ENCODE measurements at regions of chr3 and their contacts with region 1.

Region 1: GRCh38 chr3:152331018-152331541 is 62.4 kb downstream of the MBNL1 start:
- DNase-seq: no peak
- ATAC-seq: no peak
- H3K4me3 ChIP-seq: no peak overlapping the region
- H3K4me3 Mint-ChIP-seq: peak overlapping the region; percentile 6
- H3K27ac ChIP-seq: no peak overlapping the region
- H3K27ac Mint-ChIP-seq: peak overlapping the region; percentile 77
- H3K4me1 ChIP-seq: peaks cover 74% of the 10 kb centered on the region
- H3K4me1 Mint-ChIP-seq: peaks cover 88% of the 10 kb centered on the region
- H3K27me3 ChIP-seq: no peaks in the 10 kb centered on the region
- H3K27me3 Mint-ChIP-seq: no peaks in the 10 kb centered on the region
- CTCF ChIP-seq: no peak

Region 2: DNA sequence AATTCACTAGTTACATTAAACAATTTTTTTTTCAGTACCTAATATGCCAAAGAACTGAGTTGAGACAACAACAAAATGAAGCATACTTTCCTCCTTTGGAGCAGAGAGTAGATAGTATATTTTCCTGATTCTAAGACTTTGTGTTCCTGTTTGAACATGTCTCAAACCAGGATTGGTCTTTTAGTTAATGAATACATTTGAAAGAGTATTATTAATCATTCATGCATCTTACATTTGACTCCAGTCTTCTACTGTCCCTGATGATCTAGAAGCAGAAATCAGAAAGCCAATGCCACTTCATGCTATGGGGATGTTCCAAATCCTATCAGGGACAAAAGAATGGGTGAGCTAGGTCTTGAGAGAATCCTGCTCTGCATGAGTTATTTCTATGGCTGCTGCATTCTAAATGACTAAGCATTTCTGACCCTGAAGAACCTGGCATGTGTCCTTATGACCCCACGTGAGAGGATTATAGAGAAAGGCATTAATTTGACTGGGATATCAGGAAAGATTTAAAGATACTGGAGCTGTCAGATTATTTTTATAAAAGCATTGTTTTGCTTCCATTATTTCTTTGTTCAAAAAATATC is 95.3 kb before region 1 on chr3:
- CTCF ChIA-PET with region 1: no interaction called
- POLR2A ChIA-PET with region 1: no interaction called
- intact Hi-C with region 1: no loop called
- DNase-seq: no peak
- ATAC-seq: no peak
- H3K4me3 ChIP-seq: no peak overlapping the region
- H3K4me3 Mint-ChIP-seq: no peak overlapping the region
- H3K27ac ChIP-seq: no peak overlapping the region
- H3K27ac Mint-ChIP-seq: peak overlapping the region; percentile 69
- H3K4me1 ChIP-seq: peaks cover 70% of the 10 kb centered on the region
- H3K4me1 Mint-ChIP-seq: peaks cover 81% of the 10 kb centered on the region
- H3K27me3 ChIP-seq: no peaks in the 10 kb centered on the region
- H3K27me3 Mint-ChIP-seq: no peaks in the 10 kb centered on the region
- CTCF ChIP-seq: no peak

Region 3: DNA sequence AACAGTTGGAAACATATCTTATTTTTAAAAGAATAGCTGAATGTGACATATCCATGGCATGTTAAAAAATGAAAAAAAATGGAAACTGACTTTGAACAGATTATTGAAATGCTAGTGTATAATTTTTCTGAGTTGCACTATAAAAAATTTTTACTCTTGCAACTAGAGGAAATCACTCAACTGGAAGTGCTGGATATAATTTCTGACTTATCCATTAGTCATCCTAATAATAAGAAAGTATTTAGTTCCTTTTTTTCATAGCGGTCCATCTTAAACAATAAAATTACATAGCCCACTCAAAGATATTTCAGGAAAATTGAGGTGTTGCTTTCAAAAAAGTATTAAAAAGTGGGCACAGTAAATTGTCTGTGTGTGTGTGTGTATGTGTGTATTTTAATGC is 18.3 kb after region 1 on chr3:
- CTCF ChIA-PET with region 1: interaction called, 3 read pairs
- POLR2A ChIA-PET with region 1: interaction called, 5 read pairs
- intact Hi-C with region 1: loop called in 1 of 2 experiments (anchors 2 kb)
- DNase-seq: no peak
- ATAC-seq: no peak
- H3K4me3 ChIP-seq: no peak overlapping the region
- H3K4me3 Mint-ChIP-seq: no peak overlapping the region
- H3K27ac ChIP-seq: no peak overlapping the region
- H3K27ac Mint-ChIP-seq: no peak overlapping the region
- H3K4me1 ChIP-seq: peaks cover 41% of the 10 kb centered on the region
- H3K4me1 Mint-ChIP-seq: peaks cover 46% of the 10 kb centered on the region
- H3K27me3 ChIP-seq: no peaks in the 10 kb centered on the region
- H3K27me3 Mint-ChIP-seq: no peaks in the 10 kb centered on the region
- CTCF ChIP-seq: no peak

Region 4: DNA sequence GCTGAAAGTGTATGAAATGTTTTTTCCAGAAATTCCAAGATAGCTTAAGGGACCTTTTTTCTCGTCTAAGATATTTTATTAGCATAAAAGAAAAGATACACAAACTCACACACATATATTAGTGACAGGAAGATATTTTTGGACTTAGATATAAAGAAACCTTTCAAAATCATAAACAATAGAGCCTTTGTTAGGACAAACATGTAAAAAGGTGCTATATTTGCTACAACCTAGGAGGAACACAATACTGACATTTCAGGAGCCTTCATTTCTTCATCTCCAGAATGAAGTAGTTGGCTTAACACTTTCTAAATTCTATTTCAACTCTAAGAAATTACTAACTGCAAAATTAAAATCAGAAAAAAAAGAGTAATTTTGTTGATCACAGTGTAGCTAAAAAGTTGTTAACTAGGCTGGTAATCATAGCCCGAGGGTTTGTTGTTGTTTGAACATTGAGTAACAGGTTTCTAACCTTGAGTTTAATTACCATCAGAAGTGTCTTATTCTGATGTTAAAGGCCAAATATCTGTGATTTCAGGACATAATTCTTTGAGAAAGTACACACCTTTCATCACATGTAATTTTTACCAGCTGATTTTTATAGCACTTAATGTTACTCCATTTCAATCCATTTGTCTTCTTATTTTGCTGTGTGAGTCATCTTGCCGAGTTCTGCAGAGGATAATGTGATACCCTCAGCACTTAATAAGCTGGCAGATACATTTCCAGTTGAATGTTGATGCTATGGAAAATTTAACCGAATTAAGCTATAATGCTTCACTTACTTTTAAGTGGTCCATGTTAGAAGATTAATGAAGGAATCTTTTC is 34.9 kb after region 1 on chr3:
- CTCF ChIA-PET with region 1: no interaction called
- POLR2A ChIA-PET with region 1: interaction called, 6 read pairs
- intact Hi-C with region 1: loop called in 1 of 2 experiments (anchors 5 kb)
- DNase-seq: no peak
- ATAC-seq: no peak
- H3K4me3 ChIP-seq: no peak overlapping the region
- H3K4me3 Mint-ChIP-seq: no peak overlapping the region
- H3K27ac ChIP-seq: peak overlapping the region in 1 of 2 experiments; percentile 25
- H3K27ac Mint-ChIP-seq: peak overlapping the region; percentile 25
- H3K4me1 ChIP-seq: peaks cover 35% of the 10 kb centered on the region
- H3K4me1 Mint-ChIP-seq: peaks cover 80% of the 10 kb centered on the region
- H3K27me3 ChIP-seq: no peaks in the 10 kb centered on the region
- H3K27me3 Mint-ChIP-seq: no peaks in the 10 kb centered on the region
- CTCF ChIP-seq: no peak

Region 5: GRCh38 chr3:153284282-153284938 is 953.3 kb after region 1 on chr3:
- CTCF ChIA-PET with region 1: no interaction called
- POLR2A ChIA-PET with region 1: no interaction called
- intact Hi-C with region 1: no loop called
- DNase-seq: peak in 6 of 9 experiments; percentile 9 to 66 (median 36)
- ATAC-seq: peak; percentile 77
- H3K4me3 ChIP-seq: no peak overlapping the region
- H3K4me3 Mint-ChIP-seq: peak overlapping the region; percentile 63
- H3K27ac ChIP-seq: peak overlapping the region in 1 of 2 experiments; percentile 55
- H3K27ac Mint-ChIP-seq: peak overlapping the region; percentile 82
- H3K4me1 ChIP-seq: peaks cover 25% of the 10 kb centered on the region
- H3K4me1 Mint-ChIP-seq: peaks cover 44% of the 10 kb centered on the region
- H3K27me3 ChIP-seq: no peaks in the 10 kb centered on the region
- H3K27me3 Mint-ChIP-seq: no peaks in the 10 kb centered on the region
- CTCF ChIP-seq: no peak

Measured in CD8-positive, alpha-beta T cell (primary cell).